ENCODE measurements at regions of chr2 and their contacts with region 1.

Region 1: GRCh38 chr2:149629026-149629425 is 41.5 kb upstream of the MMADHC start:
- DNase-seq: no peak
- H3K4me3 ChIP-seq: no peak overlapping the region
- H3K4me3 Mint-ChIP-seq: no peak overlapping the region
- H3K27ac Mint-ChIP-seq: no peak overlapping the region
- H3K4me1 ChIP-seq: peaks cover 12% of the 10 kb centered on the region
- H3K4me1 Mint-ChIP-seq: peaks cover 11% of the 10 kb centered on the region
- H3K27me3 ChIP-seq: no peaks in the 10 kb centered on the region
- H3K27me3 Mint-ChIP-seq: no peaks in the 10 kb centered on the region
- CTCF ChIP-seq: no peak

Region 2: GRCh38 chr2:149180226-149180875 is 448.7 kb before region 1 on chr2:
- CTCF ChIA-PET with region 1: no interaction called
- POLR2A ChIA-PET with region 1: no interaction called
- intact Hi-C with region 1: no loop called
- DNase-seq: no peak
- H3K4me3 ChIP-seq: no peak overlapping the region
- H3K4me3 Mint-ChIP-seq: no peak overlapping the region
- H3K27ac Mint-ChIP-seq: peak overlapping the region; percentile 36
- H3K4me1 ChIP-seq: no peaks in the 10 kb centered on the region
- H3K4me1 Mint-ChIP-seq: peaks cover 7% of the 10 kb centered on the region
- H3K27me3 ChIP-seq: no peaks in the 10 kb centered on the region
- H3K27me3 Mint-ChIP-seq: no peaks in the 10 kb centered on the region
- CTCF ChIP-seq: no peak

Region 3: DNA sequence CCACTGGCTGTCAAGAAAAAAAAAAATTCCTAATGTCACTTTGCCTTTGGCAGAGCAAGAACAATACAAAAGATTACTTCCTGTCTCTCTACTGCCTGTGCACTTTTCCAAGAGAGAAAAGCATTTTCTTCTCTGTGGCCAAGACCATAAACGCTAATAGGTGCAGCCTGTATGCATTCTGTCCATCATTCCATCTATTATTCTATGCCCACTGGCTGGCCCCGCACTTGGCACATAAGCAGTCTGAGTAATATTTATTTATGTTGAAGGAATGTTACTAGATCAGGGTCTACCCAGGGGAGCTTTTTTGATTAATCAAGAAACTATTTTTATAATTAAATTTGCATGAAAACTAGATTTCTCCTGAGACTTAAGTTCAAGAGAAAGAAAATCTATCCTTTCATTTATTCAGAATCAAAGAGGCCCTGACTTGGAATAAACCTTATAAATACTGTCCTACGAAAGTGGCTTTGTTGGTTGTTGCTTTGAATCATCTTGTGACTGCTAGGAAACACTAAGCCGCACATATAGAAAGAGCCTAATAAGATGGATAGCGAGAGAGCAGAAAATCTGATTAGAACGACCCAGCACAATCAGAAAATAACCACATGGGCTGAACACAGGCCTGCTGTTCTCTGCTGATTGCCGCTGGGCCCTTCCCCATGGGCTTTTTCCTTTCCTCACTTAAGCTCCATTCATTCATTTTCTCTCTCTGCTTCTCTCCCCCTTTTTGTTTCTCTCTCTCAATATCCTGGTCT is 100.8 kb before region 1 on chr2:
- CTCF ChIA-PET with region 1: no interaction called
- POLR2A ChIA-PET with region 1: no interaction called
- intact Hi-C with region 1: no loop called
- DNase-seq: no peak
- H3K4me3 ChIP-seq: no peak overlapping the region
- H3K4me3 Mint-ChIP-seq: no peak overlapping the region
- H3K27ac Mint-ChIP-seq: no peak overlapping the region
- H3K4me1 ChIP-seq: no peaks in the 10 kb centered on the region
- H3K4me1 Mint-ChIP-seq: peaks cover 6% of the 10 kb centered on the region
- H3K27me3 ChIP-seq: no peaks in the 10 kb centered on the region
- H3K27me3 Mint-ChIP-seq: no peaks in the 10 kb centered on the region
- CTCF ChIP-seq: no peak

Region 4: DNA sequence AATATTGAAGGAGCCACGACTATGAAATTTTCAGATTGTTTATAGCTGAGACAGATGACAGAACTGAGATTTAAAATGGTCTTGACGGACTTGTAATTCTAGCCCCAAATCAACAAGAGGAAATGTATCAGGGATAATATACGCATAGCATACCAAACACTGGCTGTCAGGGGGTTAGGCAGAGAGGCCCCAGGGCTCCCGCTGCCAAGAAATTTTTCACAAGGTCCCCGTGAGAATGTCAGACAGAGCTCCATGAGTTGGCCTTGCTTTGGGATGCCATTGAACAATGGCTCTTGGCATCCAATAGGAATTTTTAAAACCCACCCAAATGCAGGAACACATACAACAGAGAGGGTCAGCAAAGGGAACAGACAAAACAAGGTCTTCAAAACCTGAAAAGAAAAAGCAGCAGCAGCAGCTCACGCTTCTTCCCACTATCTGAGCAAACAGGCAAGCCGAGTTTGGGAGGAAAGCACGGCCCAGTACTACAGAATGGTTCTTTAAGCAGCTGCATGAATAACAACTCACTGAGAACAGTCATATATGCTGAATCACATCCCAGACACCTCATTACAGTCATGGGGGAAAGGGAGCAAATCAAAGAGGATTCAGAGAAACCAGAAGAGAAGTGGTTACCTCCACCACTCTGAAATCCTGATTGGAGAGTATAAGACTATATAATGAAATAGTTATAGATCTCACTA is 412.8 kb after region 1 on chr2:
- CTCF ChIA-PET with region 1: no interaction called
- POLR2A ChIA-PET with region 1: interaction called, 13 read pairs
- intact Hi-C with region 1: no loop called
- DNase-seq: no peak
- H3K4me3 ChIP-seq: no peak overlapping the region
- H3K4me3 Mint-ChIP-seq: no peak overlapping the region
- H3K27ac Mint-ChIP-seq: no peak overlapping the region
- H3K4me1 ChIP-seq: peaks cover 27% of the 10 kb centered on the region
- H3K4me1 Mint-ChIP-seq: peaks cover 35% of the 10 kb centered on the region
- H3K27me3 ChIP-seq: no peaks in the 10 kb centered on the region
- H3K27me3 Mint-ChIP-seq: no peaks in the 10 kb centered on the region
- CTCF ChIP-seq: no peak

Measured in Caco-2 (cell line).